Activated naive CD4-positive, alpha-beta T cell treated with anti-CD3 and anti-CD28 coated beads for 36 hours (primary cell): ENCODE measurements at regions of chrX and their contacts with region 1.

Region 1: DNA sequence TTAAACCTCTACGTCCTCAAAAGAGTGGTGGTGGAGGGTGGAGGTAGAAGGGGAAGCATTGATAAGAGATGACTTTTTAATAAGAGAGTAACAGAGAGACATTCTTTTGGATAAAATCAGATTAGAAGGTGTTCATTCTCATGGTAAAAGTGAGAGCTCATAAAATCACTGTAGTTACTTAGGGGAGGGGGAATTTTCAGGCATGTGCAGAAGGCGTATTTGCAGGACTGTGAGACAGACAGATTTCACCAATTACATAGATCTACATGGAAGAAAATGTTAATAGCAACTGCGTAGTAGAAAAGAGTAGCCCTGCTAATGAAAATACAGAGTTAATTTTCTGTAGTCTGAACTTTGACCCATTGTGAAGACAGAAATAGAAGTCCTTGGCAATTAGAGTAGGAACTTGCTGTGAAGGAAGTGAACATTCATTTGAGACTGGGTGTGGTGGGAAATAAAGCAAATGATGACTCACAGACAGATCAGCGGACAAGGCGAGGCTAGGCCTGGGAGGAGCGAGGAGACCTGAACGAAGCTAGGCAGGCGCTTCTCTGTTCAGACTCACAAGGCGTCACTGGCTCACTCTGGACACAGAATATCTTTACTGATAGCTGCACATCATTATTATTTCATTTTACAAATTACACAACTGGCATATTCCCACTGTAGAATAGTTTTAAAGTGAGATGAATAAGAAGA is 57.2 kb upstream of the FAM9C start:
- DNase-seq: peak; percentile 66
- H3K4me3 Mint-ChIP-seq: no peak overlapping the region
- H3K27ac Mint-ChIP-seq: peak overlapping the region; percentile 11
- H3K4me1 Mint-ChIP-seq: peaks cover 53% of the 10 kb centered on the region
- H3K27me3 Mint-ChIP-seq: no peaks in the 10 kb centered on the region

Region 2: DNA sequence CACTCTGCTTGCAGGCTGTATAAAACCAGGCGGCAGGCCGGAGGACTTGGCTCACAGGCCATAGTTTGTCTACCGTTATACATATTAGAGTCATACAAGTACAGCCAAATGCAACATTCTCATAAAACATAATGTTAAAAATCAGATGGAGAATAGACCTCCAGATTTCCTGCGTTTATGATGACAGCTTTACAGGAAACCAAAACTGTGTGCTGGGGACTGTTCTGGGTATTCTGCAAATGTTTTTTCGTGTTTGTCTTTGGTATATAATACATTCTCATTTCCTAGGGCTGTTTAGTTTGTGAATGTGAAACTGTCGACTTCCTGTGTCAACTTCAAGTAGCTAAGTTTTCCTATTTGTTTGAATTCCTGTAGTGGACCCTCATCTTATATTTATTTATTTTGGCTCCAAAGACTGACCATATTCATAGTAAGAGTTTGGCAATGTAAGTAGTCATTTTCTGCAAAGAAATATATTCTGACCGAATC is 22.3 kb after region 1 on chrX:
- CTCF ChIA-PET with region 1: no interaction called
- intact Hi-C with region 1: loop called (anchors 2 kb)
- DNase-seq: peak; percentile 6
- H3K4me3 Mint-ChIP-seq: peak overlapping the region; percentile 39
- H3K27ac Mint-ChIP-seq: peak overlapping the region; percentile 70
- H3K4me1 Mint-ChIP-seq: peaks cover 49% of the 10 kb centered on the region
- H3K27me3 Mint-ChIP-seq: no peaks in the 10 kb centered on the region